Aorta (tissue), 5 donors: ENCODE measurements at regions of chr2 and their contacts with region 1.

Region 1: DNA sequence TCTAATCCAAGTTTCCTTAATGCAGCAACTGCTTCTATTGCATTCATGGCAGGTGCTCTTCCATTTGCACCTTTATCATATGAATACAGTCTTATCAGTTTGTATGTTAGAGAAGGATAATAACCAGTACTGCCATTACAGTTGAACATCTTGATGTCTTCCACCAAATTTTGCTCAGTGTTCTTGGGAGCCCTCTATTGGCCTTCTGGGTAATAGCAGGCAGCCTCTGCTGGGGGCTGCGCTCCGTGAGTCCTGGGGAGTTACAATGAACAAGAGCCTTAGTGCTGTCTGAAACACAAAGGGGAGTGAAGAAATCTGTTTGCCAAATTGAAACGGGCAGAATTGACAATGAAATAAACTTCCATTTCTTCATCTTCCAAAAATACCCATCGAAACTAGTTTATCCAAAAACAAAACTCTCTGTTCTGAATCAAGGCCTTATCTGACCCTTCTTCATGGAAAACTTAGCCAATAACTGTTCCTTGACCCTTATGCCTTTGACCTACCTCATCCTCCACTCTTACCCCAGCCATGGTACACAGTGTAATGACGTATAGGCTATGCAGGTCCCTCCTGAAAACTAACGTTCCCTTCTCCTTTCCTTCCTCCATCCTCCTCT is 79.9 kb downstream of the ALK start:
- DNase-seq: no peak
- ATAC-seq: no peak
- H3K4me3 ChIP-seq: no peak overlapping the region
- H3K27ac ChIP-seq: no peak overlapping the region
- H3K4me1 ChIP-seq: peaks cover 0 to 2% of the 10 kb centered on the region in 2 donors
- H3K27me3 ChIP-seq: no peaks in the 10 kb centered on the region

Region 2: GRCh38 chr2:29309090-29310029 is 532.1 kb before region 1 on chr2:
- intact Hi-C with region 1: loop called in 1 of 2 experiments (anchors 2 kb)
- DNase-seq: no peak
- ATAC-seq: no peak
- H3K4me3 ChIP-seq: no peak overlapping the region
- H3K27ac ChIP-seq: no peak overlapping the region
- H3K4me1 ChIP-seq: no peaks in the 10 kb centered on the region
- H3K27me3 ChIP-seq: no peaks in the 10 kb centered on the region